Astrocyte of the cerebellum (primary cell): ENCODE measurements at regions of chr10 and their contacts with region 1.

Region 1: DNA sequence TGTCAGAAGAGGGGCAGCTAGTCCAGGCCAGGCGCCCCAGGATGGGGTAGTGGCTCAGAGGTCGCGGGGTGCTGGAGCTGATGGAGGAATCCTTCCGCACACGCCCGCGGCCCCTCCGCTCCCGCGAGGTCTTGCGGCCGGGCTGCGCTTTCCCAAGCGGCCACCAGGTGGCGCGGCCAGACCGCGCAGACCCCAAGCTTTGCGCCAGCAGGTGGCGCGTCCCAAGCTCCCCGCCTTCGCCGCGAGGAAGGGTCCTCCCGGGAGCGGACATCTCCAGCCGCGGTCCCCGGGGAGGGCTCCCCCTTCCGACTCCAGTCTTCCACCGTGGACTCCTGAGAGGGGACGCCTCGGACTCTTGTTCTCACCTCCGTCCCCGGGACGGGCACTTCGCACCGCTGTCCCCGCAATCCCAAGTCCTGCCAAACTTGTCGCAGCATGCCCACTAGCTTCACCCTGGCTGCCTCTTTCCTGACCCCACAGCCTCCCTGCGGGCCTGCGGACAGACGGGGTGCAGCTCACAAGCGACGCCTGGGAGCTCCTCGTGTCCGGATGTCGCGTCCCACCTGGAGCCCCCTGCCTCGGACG is 19.4 kb downstream of the KCNK18 start:
- DNase-seq: peak; percentile 32
- H3K4me3 ChIP-seq: peak overlapping the region; percentile 50
- CTCF ChIP-seq: peak; percentile 100

Region 2: DNA sequence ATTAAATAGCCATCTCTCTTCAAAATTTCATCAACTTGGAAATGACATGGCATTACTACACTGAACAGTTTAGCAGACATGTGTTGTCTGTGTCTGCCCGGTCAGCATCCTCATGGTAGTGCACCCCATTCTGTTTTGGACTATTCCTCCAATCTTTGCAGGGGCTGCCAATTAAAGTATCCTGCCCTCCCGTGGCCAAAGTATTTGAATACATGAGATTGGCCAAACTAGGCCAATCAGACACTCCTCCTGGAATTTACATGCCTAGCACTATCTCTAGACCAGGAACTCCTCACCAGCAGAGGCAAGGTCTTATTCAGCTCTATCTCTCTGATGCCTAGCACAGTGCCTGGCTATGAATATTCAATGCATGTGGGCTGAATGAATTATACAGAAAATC is 216.1 kb before region 1 on chr10:
- in situ Hi-C with region 1: no loop called
- DNase-seq: no peak
- H3K4me3 ChIP-seq: no peak overlapping the region
- CTCF ChIP-seq: no peak

Region 3: DNA sequence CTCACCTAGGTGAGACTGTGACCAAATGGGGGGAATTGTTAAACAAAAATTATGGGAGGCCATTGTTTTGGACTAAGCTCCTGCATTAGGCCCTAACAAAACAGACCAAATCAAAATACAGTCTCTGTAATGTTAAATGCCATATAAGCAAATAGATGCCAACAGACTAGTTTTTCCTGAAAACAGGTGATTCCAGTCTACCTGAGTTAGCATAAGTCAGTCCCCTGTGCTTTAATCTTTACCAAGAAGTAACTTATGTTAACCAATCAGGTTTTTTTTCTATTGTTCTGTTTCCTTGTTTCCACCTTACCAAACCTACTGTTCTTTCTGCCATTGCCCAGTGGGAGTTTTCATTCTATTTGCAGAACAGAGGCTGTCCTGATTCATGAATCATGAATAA is 110.6 kb after region 1 on chr10:
- in situ Hi-C with region 1: loop called (anchors 5 kb)
- DNase-seq: no peak
- H3K4me3 ChIP-seq: no peak overlapping the region
- CTCF ChIP-seq: no peak

Region 4: DNA sequence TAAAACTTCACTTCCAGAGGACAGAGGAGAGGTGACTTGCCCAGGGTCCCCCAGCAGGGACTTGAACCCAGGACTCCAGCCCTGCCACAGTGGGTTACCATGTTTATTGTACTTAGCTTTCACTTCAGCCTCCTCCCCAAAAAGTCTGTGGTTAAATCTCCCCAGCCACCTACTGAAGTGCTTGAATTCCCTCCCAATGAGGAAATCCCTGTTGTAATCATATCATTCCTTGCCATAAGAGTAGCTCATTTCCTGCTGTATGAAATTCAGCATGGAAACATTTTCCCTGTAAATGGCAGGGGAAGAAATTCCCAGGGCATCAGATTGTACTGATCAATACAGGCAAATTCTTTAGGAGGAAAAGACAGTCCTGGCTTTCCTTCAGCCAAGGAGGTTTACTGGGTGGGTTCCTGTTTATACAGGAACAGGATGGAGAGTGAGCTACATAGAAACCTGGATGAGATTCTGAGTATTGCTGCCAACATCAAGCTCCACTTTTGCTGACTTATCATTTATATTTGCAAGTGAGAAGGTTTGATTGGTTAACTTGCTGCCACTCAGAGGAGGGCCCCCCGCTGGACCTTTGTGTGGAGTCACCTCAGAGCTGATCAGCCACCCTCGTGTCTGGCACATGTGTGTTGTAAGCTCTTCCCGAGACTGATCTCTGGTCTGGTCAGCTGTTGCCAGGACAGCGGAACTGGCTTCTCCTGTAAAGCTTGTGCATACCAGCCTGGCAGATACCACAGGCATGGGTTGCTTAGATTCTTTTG is 174.9 kb after region 1 on chr10:
- in situ Hi-C with region 1: no loop called
- DNase-seq: peak; percentile 40
- H3K4me3 ChIP-seq: no peak overlapping the region
- CTCF ChIP-seq: no peak

Region 5: DNA sequence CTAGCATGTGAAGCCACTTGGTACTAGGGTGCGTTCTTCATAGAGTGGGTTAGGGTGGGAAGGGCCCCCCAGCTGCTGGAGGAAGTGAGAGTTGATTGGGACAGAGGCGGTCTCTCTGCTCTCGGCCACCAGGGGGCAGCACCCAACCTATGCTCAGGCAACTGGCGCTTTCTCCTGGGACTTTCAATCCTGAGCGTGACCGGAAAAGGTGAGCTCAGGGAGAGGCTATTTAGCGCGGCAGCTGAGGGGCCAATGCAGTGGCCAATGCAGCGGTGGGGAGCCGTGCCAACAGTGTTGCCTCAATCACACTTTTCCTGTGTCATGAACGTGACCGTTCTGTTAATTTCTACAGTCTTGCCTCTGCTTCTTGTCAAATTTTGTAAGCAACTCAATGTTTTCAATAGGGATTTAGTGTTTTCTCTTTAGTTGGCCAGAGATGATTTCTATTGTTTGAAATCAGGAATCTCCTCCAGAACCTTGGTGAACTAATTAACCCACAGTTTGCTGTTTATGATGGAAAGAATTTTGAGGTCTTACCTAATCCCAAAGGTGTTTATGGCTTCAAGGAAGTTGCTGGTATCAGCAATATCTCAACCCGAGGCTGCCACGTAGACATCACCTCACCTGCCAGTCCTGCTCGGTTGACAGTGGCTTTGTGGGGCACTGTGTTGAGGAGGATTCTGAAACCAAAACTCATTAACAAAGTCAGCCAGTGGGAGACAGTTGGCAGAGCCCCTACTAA is 226.4 kb after region 1 on chr10:
- in situ Hi-C with region 1: loop called (anchors 25 kb)
- DNase-seq: no peak
- H3K4me3 ChIP-seq: no peak overlapping the region
- CTCF ChIP-seq: peak; percentile 81